ENCODE measurements at regions of chr17 and their contacts with region 1.

Region 1: GRCh38 chr17:44556832-44557606 is at the start of gene FZD2:
- DNase-seq: peak; percentile 86 to 89 (median 88)
- H3K4me3 ChIP-seq: peak within 1 kb of the TSS; percentile 52
- H3K27ac ChIP-seq: peak within 1 kb of the TSS; percentile 63 to 73
- H3K4me1 ChIP-seq: peaks cover 13% of the 10 kb centered on the region
- H3K27me3 ChIP-seq: no peaks in the 10 kb centered on the region
- CTCF ChIP-seq: no peak
- EP300 ChIP-seq: no peak
- POLR2A ChIP-seq: no peak
- total RNA-seq, gene FZD2: 1.6 to 12.5 (median 9.3) TPM

Region 2: DNA sequence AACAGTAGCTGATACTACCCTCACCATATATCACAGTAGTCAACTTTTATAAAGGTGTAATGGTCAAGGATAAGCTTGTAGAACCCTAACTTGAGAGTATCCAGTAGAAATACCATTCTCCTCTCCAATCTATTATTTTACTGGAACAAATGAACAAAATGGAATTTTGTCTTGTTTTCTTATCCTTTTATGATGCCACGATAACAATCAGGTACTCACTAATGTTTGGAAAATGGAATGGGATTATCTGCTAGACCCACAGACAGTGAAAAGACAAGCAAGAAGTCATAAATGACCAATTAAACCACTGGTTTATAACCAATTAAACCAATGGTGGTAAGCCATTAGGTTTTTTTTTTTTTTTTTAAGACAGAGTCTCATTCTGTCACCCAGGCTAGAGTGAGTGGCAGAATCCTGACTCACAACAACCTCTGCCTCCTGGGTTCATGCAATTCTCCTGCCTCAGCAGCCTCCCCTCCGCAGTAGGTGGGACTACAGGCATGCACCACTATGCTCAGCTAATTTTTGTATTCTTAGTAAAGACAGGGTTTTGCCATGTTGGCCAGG is 64.2 kb before region 1 on chr17:
- intact Hi-C with region 1: no loop called
- DNase-seq: no peak
- H3K4me3 ChIP-seq: no peak overlapping the region
- H3K27ac ChIP-seq: no peak overlapping the region
- H3K4me1 ChIP-seq: peaks cover 6% of the 10 kb centered on the region
- H3K27me3 ChIP-seq: no peaks in the 10 kb centered on the region
- CTCF ChIP-seq: no peak
- EP300 ChIP-seq: no peak
- POLR2A ChIP-seq: no peak

Region 3: DNA sequence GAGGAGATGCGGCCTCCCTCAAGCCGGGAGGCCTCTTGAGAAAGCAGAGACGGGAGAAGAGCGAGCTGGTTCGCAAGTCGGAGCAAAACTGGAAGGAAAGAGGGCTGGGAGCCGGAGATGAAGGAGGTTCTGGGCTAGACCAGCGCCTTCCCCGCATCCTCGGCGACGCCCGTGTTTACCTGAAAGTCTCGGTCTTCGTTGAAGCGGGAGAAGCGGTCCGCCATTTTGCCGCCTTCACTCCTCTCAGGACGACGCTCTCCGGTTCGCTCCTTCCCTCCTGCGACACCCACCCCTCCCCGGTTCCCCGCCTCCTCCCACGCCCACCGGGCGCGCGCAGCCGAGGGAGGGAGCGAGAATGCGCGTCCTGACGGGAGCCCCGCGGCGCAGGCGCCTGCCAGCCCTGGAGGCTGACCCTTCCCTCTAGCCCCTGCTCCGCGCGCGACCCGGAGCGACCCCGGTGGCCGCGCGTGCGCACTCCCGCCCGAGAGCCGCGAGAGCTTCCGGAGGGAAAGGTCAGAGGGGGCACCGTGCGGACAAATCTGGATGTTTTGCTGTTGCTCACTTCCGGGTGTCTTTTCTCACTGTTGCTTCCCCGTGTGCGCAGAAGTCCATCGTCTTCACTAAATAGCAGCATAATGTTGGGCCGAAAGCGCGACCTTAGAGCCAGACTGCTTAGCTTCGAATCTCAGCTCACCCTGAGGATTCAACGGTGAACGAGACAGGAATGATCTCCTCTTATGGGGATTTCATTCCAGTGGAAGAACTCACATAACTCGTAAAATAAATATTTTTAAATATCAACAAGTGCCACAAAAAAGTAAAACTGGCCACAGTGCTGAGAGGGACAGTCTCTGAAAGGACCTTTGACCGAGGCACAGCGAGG is 53.6 kb before region 1 on chr17 and contains the start of gene GPATCH8:
- intact Hi-C with region 1: loop called in 1 of 4 experiments (anchors 5 kb)
- DNase-seq: peak; percentile 94 to 96 (median 94)
- H3K4me3 ChIP-seq: peak within 1 kb of the TSS; percentile 73
- H3K27ac ChIP-seq: peak within 1 kb of the TSS; percentile 76 to 89
- H3K4me1 ChIP-seq: peaks cover 9% of the 10 kb centered on the region
- H3K27me3 ChIP-seq: no peaks in the 10 kb centered on the region
- CTCF ChIP-seq: no peak
- EP300 ChIP-seq: peak; percentile 0
- POLR2A ChIP-seq: peak; percentile 69
- total RNA-seq, gene GPATCH8: 27.6 to 57.3 (median 48.9) TPM

Region 4: GRCh38 chr17:44598329-44598728 is 41.3 kb after region 1 on chr17:
- intact Hi-C with region 1: loop called in 1 of 4 experiments (anchors 1 kb)
- DNase-seq: no peak
- H3K4me3 ChIP-seq: no peak overlapping the region
- H3K27ac ChIP-seq: no peak overlapping the region
- H3K4me1 ChIP-seq: peaks cover 11% of the 10 kb centered on the region
- H3K27me3 ChIP-seq: no peaks in the 10 kb centered on the region
- CTCF ChIP-seq: no peak
- EP300 ChIP-seq: no peak
- POLR2A ChIP-seq: no peak

Region 5: DNA sequence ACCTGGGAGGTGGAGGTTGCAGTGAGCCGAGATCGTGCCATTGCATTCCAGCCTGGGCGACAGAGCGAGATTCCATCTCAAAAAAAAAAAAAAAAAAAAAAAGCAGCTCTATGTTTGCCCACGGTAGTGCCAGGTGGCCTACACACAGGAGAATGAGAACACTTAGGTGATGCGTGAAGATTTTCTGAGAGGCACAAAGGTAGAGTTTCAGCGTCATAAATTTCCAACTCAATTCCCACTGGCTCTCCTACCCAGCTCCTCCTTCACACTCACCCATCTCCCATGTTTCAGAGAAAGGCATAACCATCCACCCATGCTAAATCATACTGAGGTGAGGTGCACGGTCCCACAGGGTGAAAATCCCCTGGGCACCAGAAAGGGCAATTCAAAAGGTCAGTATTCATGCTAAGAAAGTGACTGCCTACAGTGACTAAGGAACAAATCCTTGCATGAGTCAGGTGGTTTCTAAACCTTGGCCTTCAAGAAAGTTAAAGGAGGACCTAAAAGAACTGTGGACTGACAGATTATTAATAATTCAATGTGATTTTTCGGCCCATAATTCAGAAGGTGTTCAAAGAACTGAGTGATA is 489.6 kb after region 1 on chr17:
- intact Hi-C with region 1: no loop called
- DNase-seq: no peak
- H3K4me3 ChIP-seq: no peak overlapping the region
- H3K27ac ChIP-seq: no peak overlapping the region
- H3K4me1 ChIP-seq: peaks cover 14% of the 10 kb centered on the region
- H3K27me3 ChIP-seq: no peaks in the 10 kb centered on the region
- CTCF ChIP-seq: no peak
- EP300 ChIP-seq: no peak
- POLR2A ChIP-seq: no peak